Activated CD4-positive, alpha-beta T cell treated with anti-CD3 and anti-CD28 coated beads for 36 hours (primary cell): ENCODE measurements at regions of chr21 and their contacts with region 1.

Region 1: GRCh38 chr21:25421327-25422028 is 185.8 kb downstream of the MRPL39 start:
- DNase-seq: peak; percentile 82
- ATAC-seq: peak; percentile 96
- H3K4me3 Mint-ChIP-seq: peak overlapping the region; percentile 59
- H3K27ac Mint-ChIP-seq: peak overlapping the region; percentile 94
- H3K4me1 Mint-ChIP-seq: peaks cover 74% of the 10 kb centered on the region
- H3K27me3 Mint-ChIP-seq: no peaks in the 10 kb centered on the region

Region 2: DNA sequence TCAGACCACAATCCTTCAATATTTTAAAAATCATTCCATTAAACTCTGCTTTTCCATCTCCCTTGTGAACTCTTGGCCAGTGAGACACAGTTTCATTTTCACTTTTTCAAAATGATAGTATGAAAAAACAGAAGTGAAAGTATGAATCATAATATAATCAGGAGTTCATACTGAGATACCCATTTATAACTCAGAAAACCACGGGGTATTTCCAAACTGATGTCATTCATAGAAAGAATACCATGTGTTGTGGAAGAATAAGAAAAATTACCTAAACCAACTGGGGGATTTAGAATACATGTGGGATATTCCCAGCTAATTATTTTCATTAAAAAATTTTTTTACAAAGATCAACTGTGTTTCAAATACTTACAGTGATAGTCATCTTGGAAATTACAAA is 35.9 kb after region 1 on chr21:
- CTCF ChIA-PET with region 1: interaction called, 8 read pairs
- POLR2A ChIA-PET with region 1: interaction called, 3 read pairs
- intact Hi-C with region 1: loop called (anchors 1 kb)
- DNase-seq: no peak
- ATAC-seq: peak; percentile 46
- H3K4me3 Mint-ChIP-seq: peak overlapping the region; percentile 67
- H3K27ac Mint-ChIP-seq: peak overlapping the region; percentile 89
- H3K4me1 Mint-ChIP-seq: peaks cover 83% of the 10 kb centered on the region
- H3K27me3 Mint-ChIP-seq: no peaks in the 10 kb centered on the region

Region 3: DNA sequence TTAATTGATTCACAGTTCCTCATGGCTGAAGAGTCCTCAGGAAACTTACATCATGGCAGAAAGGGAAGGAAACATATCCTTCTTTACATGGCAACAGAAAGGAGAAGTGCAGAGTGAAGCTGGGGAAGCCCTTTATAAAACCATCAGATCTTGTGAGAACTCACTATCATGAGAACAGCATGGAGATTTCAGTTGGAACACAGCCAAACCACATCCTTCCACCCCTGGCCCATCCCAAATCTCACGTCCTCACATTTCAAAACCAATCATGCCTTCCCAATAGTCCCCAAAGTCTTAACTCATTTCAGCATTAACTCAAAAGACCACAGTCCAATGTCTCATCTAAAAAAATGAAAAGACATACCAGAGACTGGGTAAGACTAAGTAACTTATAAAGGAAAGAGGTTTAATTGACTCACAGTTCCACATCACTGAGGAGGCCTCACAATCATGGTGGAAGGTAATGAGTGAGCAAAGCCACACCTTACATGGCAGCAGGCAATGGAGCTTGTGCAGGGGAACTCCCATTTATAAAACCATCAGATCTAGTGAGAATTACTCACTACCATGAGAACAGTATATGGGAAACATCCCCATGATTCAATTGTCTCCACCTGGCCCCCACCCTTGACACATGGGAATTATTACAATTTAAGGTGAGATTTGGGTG is 80.7 kb after region 1 on chr21:
- CTCF ChIA-PET with region 1: interaction called, 10 read pairs
- POLR2A ChIA-PET with region 1: interaction called, 4 read pairs
- intact Hi-C with region 1: loop called (anchors 1 to 2 kb)
- DNase-seq: peak; percentile 83
- ATAC-seq: peak; percentile 87
- H3K4me3 Mint-ChIP-seq: peak overlapping the region; percentile 57
- H3K27ac Mint-ChIP-seq: peak overlapping the region; percentile 99
- H3K4me1 Mint-ChIP-seq: peaks cover 80% of the 10 kb centered on the region
- H3K27me3 Mint-ChIP-seq: no peaks in the 10 kb centered on the region

Region 4: GRCh38 chr21:25561668-25562641 is 140.5 kb after region 1 on chr21:
- CTCF ChIA-PET with region 1: interaction called, 14 read pairs
- POLR2A ChIA-PET with region 1: interaction called, 4 read pairs
- intact Hi-C with region 1: loop called (anchors 1 kb)
- DNase-seq: peak; percentile 90
- ATAC-seq: peak; percentile 69
- H3K4me3 Mint-ChIP-seq: peak overlapping the region; percentile 93
- H3K27ac Mint-ChIP-seq: peak overlapping the region; percentile 100
- H3K4me1 Mint-ChIP-seq: peaks cover 43% of the 10 kb centered on the region
- H3K27me3 Mint-ChIP-seq: no peaks in the 10 kb centered on the region

Region 5: GRCh38 chr21:25573409-25574206 is 152.1 kb after region 1 on chr21:
- CTCF ChIA-PET with region 1: interaction called, 14 read pairs
- POLR2A ChIA-PET with region 1: interaction called, 8 read pairs
- intact Hi-C with region 1: loop called (anchors 2 kb)
- DNase-seq: peak; percentile 83
- ATAC-seq: peak; percentile 34
- H3K4me3 Mint-ChIP-seq: peak overlapping the region; percentile 93
- H3K27ac Mint-ChIP-seq: peak overlapping the region; percentile 96
- H3K4me1 Mint-ChIP-seq: peaks cover 72% of the 10 kb centered on the region
- H3K27me3 Mint-ChIP-seq: no peaks in the 10 kb centered on the region

Region 6: DNA sequence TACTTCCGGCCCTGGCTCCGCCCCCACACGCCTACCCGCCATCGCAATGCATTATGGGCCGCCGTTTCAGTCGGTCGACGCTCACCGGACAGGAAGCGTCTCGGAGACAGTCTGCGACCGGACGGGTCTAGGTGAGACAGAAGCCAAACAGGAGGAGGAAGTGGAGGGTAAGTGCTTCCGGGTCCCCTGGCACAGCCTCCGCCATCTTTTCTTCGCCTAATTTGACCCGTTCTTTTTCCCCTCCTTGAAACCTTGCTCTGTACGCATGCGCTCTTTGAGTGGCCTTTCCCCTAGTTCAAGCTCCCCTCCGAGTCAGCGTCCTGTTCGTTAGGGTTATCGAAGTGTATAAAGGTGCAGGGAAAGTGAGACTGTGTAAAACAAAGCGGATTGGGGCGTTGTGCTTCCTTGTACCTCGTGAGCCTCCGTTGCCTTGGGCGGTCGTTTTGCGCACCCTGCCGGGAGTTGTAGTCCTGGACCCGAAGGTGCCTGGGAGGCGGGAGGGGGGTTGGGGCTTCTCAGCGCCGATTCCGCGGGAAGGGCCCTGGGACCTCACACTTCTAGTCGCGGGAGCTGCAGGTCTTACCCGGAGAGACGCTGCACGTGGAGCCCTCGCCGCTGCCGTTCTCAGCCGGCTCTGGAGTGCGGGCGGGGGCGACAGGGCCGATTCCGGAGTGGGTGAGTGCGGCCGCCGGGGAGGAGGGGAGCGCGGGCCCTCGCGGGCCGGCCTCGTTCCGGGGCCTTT is 313.6 kb after region 1 on chr21 and contains the starts of genes ATP5PF and GABPA:
- CTCF ChIA-PET with region 1: no interaction called
- POLR2A ChIA-PET with region 1: no interaction called
- intact Hi-C with region 1: loop called in 1 of 2 experiments (anchors 2 kb)
- DNase-seq: peak; percentile 99
- ATAC-seq: peak; percentile 94
- H3K4me3 Mint-ChIP-seq: peak within 1 kb of the TSS; percentile 98
- H3K27ac Mint-ChIP-seq: peak within 1 kb of the TSS; percentile 100
- H3K4me1 Mint-ChIP-seq: peaks cover 48% of the 10 kb centered on the region
- H3K27me3 Mint-ChIP-seq: no peaks in the 10 kb centered on the region
- total RNA-seq, gene ATP5PF: 154 to 165 TPM
- total RNA-seq, gene GABPA: 18.7 to 25.3 TPM